A549 (cell line): ENCODE measurements at regions of chr20 and their contacts with region 1.

Region 1: DNA sequence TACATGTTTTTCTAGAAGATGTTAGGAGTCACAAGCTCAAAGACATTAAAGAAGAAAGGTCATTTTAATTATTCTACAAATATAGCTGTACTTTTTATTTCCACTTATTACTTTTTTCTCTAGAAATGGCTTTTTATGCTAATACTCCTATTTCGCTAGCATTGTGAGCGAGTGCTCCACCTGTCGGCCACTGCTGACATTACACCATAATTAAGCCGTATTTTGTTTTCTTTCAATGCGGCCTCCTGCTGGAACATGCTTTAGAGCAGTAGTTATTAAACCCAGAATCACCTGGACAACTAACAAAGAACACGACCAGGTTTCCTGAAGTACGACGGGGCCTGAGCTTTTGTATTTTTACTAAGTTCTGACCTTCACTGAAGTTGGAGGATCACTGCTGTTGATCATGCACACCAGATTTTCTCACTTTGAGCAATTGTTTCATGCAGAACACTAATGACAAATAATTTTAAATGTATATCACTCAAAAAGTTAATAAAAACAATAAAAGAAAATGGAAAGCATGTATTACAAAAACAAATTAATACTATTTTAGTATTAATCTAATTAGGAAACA is 74.1 kb upstream of the PAK5 start:
- DNase-seq: peak; percentile 38 to 57
- ATAC-seq: peak; percentile 68 to 82; a peak in 5 of 6 replicates
- H3K4me3 ChIP-seq: no peak overlapping the region
- H3K27ac ChIP-seq: no peak overlapping the region
- H3K4me1 ChIP-seq: no peaks in the 10 kb centered on the region
- CTCF ChIP-seq: peak; percentile 85
- EP300 ChIP-seq: no peak
- POLR2A ChIP-seq: no peak
- RAD21 ChIP-seq: peak; percentile 60 to 64

Region 2: DNA sequence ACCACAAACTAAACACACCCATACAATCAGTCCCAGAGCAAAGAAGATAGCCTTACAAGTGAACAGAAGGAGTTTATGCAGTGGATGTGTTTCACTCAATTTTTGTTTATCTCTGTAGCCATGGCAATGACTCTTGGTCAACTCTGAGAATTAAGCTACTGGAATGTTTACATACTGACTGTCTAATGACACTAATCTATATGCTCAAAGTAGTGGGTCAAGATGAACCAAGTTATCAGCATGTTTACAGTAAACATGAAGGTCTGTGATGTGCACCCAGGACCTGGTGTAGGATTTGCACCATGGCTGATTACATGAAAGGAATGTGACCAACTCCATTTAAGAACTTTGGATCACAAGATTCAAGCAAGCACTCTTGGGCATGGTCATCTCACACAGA is 55.5 kb before region 1 on chr20:
- CTCF ChIA-PET with region 1: interaction called, 10 read pairs
- POLR2A ChIA-PET with region 1: no interaction called
- DNase-seq: no peak
- ATAC-seq: no peak
- H3K4me3 ChIP-seq: no peak overlapping the region
- H3K27ac ChIP-seq: no peak overlapping the region
- H3K4me1 ChIP-seq: no peaks in the 10 kb centered on the region
- CTCF ChIP-seq: no peak
- EP300 ChIP-seq: no peak
- POLR2A ChIP-seq: no peak
- RAD21 ChIP-seq: no peak

Region 3: GRCh38 chr20:10047427-10047826 is 134.5 kb after region 1 on chr20:
- CTCF ChIA-PET with region 1: no interaction called
- POLR2A ChIA-PET with region 1: no interaction called
- DNase-seq: peak; percentile 42 to 53
- ATAC-seq: peak; percentile 94 to 97
- H3K4me3 ChIP-seq: no peak overlapping the region
- H3K27ac ChIP-seq: peak overlapping the region in 1 of 2 experiments; percentile 9; a peak in 1 of 6 replicates
- H3K4me1 ChIP-seq: no peaks in the 10 kb centered on the region
- CTCF ChIP-seq: peak; percentile 32; the same call in 2 of the 3 replicates
- EP300 ChIP-seq: no peak
- POLR2A ChIP-seq: no peak
- RAD21 ChIP-seq: peak; percentile 25 to 28; a peak in 1 of 5 replicates